HEK293T (cell line): ENCODE measurements at regions of chr10 and their contacts with region 1.

Region 1: GRCh38 chr10:68348265-68348741 is 15.6 kb upstream of the PBLD start:
- DNase-seq: peak; percentile 58

Region 2: GRCh38 chr10:68331455-68332258 is 16.6 kb before region 1 on chr10 and contains the start of gene HNRNPH3:
- CTCF ChIA-PET with region 1: interaction called, 7 read pairs
- POLR2A ChIA-PET with region 1: interaction called, 34 read pairs
- DNase-seq: peak; percentile 97

Region 3: DNA sequence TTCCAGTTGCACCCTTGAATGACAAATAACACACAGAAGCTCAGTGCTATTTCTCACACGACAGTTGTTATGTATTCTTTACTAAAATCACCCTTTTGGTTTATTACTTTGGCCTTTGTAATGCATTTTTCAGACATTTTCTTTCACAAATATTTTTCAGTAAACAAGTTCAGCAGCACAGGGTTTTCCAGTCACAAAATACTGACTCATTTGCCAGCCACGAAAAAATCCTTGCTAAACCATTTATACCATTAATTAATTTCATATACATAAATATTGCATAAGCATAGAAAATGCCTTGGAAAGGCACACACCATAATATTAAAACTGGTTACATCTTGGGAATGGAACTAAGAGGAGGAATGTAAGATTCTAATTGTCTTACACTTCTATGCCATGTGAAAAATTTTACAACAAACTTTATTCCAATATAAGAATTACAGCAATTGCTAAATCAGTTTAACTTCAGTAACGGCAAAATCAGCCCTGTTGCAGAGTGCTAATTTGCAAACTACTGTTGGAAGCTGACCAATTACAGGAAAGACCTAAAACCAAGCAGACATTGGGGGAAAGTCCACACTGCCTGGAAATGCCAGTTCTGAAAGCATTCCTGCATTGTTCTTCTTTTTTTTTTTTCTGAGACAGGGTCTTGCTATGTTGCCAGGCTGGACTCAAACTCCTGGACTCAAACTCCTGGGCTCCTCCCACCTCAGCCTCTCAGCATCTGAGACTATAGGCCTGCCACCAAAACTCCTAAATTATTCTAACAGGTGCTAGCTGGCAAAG is 16.0 kb after region 1 on chr10:
- CTCF ChIA-PET with region 1: interaction called, 10 read pairs
- POLR2A ChIA-PET with region 1: interaction called, 3 read pairs
- DNase-seq: no peak

Region 4: GRCh38 chr10:68647672-68648341 is 299.5 kb after region 1 on chr10:
- CTCF ChIA-PET with region 1: interaction called, 10 read pairs
- POLR2A ChIA-PET with region 1: no interaction called
- DNase-seq: no peak